Naive thymus-derived CD4-positive, alpha-beta T cell (primary cell): ENCODE measurements at regions of chr20 and their contacts with region 1.

Region 1: DNA sequence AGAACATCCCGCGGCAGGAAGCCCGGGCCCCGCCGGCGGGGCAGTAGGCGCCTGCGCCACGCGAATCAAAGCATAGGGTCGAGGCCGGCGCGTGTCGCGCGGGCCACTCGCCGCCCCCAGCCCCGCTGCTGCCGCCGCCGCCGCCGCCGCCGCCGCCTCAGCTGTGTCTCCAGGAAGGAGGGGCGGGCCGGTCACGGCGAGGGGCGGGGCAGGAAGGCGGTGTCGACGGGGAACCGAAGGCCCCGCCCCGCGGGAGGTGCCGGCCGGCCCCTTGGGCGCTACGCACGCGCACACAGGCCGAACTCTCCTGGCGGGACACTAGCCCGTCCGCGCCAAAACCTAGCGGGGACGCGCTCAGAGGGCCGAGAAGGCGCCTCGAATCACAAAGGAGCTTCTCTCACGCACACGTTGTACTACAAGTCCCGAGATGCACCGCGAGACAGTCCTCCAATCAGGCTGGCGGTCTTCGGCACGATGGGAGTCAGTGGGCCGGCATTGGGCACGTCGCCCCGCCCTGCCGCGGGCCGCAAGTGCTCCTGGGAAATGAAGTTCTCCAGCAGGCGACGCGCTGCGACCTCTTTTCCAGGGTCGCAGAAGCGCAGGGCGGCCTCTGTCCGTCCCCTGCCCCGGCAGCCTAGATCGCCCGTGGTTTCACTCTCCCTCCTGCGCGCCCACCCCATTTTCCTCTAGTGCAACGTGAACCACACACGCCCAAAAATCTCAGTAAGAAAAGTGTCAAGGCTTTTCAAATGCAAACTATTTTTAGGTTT is at the start of gene RALGAPA2:
- DNase-seq: peak; percentile 91 to 97 (median 95)
- ATAC-seq: peak; percentile 98
- H3K4me3 ChIP-seq: peak within 1 kb of the TSS; percentile 97
- H3K4me3 Mint-ChIP-seq: peak within 1 kb of the TSS; percentile 89 to 98 (median 96)
- H3K27ac ChIP-seq: peak within 1 kb of the TSS; percentile 91
- H3K27ac Mint-ChIP-seq: peak within 1 kb of the TSS; percentile 90 to 98 (median 95)
- H3K4me1 ChIP-seq: peaks cover 9% of the 10 kb centered on the region in 2 donors
- H3K4me1 Mint-ChIP-seq: peaks cover 23 to 41% (median 29%) of the 10 kb centered on the region in 7 donors
- H3K27me3 ChIP-seq: no peaks in the 10 kb centered on the region
- H3K27me3 Mint-ChIP-seq: no peaks in the 10 kb centered on the region
- total RNA-seq, gene RALGAPA2: 27.5 to 45.4 (median 35.1) TPM

Region 2: GRCh38 chr20:18793625-18794427 is 1918.8 kb before region 1 on chr20:
- CTCF ChIA-PET with region 1: no interaction called
- POLR2A ChIA-PET with region 1: no interaction called
- intact Hi-C with region 1: loop called (anchors 10 kb)
- DNase-seq: peak; percentile 62 to 94 (median 87)
- ATAC-seq: peak; percentile 99
- H3K4me3 ChIP-seq: peak overlapping the region; percentile 87
- H3K4me3 Mint-ChIP-seq: peak overlapping the region; percentile 85 to 99 (median 96)
- H3K27ac ChIP-seq: peak overlapping the region; percentile 92
- H3K27ac Mint-ChIP-seq: peak overlapping the region; percentile 97 to 100 (median 99)
- H3K4me1 ChIP-seq: peaks cover 8% of the 10 kb centered on the region in 2 donors
- H3K4me1 Mint-ChIP-seq: peaks cover 0 to 24% (median 18%) of the 10 kb centered on the region in 7 donors
- H3K27me3 ChIP-seq: no peaks in the 10 kb centered on the region
- H3K27me3 Mint-ChIP-seq: peaks cover 11 to 26% (median 21%) of the 10 kb centered on the region in 5 donors

Region 3: GRCh38 chr20:19867940-19868371 is 844.7 kb before region 1 on chr20:
- CTCF ChIA-PET with region 1: no interaction called
- POLR2A ChIA-PET with region 1: no interaction called
- intact Hi-C with region 1: no loop called
- DNase-seq: no peak
- ATAC-seq: peak; percentile 74
- H3K4me3 ChIP-seq: no peak overlapping the region
- H3K4me3 Mint-ChIP-seq: no peak overlapping the region
- H3K27ac ChIP-seq: no peak overlapping the region
- H3K27ac Mint-ChIP-seq: no peak overlapping the region
- H3K4me1 ChIP-seq: no peaks in the 10 kb centered on the region
- H3K4me1 Mint-ChIP-seq: no peaks in the 10 kb centered on the region
- H3K27me3 ChIP-seq: no peaks in the 10 kb centered on the region
- H3K27me3 Mint-ChIP-seq: peaks cover 0 to 29% (median 7%) of the 10 kb centered on the region in 5 donors

Region 4: DNA sequence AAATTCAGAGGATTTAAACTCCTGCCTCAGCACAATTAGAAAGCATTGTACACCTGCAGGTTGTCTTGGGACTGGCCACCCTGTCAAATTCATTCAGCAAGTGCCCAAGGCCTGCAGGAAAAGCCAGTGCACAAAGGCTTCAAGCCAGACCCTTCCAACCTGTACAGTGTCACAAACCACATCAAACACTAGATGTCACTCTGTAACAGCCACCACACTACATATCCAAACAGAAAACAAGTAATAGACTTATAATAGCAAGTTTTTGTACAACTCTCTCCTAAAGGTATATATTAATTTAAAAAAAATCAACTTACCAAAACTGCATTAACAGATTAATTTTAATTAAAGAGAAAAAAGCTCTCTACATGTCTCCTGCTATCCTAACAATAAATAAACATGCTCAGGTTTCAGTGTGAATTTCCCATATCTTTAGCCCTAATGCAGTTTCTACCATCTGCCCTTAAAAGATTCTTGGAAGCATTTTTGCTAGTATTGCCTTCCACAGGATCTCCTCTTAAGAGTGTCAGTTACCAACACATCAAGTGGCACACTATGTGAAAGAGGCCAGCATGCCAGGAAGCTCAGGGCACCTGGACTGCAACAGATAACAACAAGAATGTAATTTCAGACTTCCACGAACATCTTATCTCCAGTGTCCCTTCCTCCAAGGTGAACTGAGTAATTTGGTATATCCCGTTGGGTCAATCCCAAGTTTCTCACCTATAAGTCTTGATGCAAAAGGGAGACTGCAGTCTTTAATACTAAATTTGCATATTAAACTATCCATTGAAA is 47.7 kb before region 1 on chr20:
- CTCF ChIA-PET with region 1: no interaction called
- POLR2A ChIA-PET with region 1: no interaction called
- intact Hi-C with region 1: loop called in 1 of 2 experiments (anchors 2 kb)
- DNase-seq: peak in 3 of 9 donors; percentile 10 to 18 (median 17)
- ATAC-seq: peak; percentile 61
- H3K4me3 ChIP-seq: no peak overlapping the region
- H3K4me3 Mint-ChIP-seq: no peak overlapping the region
- H3K27ac ChIP-seq: no peak overlapping the region
- H3K27ac Mint-ChIP-seq: no peak overlapping the region
- H3K4me1 ChIP-seq: no peaks in the 10 kb centered on the region
- H3K4me1 Mint-ChIP-seq: peaks cover 21 to 50% (median 43%) of the 10 kb centered on the region in 7 donors
- H3K27me3 ChIP-seq: no peaks in the 10 kb centered on the region
- H3K27me3 Mint-ChIP-seq: no peaks in the 10 kb centered on the region

Region 5: DNA sequence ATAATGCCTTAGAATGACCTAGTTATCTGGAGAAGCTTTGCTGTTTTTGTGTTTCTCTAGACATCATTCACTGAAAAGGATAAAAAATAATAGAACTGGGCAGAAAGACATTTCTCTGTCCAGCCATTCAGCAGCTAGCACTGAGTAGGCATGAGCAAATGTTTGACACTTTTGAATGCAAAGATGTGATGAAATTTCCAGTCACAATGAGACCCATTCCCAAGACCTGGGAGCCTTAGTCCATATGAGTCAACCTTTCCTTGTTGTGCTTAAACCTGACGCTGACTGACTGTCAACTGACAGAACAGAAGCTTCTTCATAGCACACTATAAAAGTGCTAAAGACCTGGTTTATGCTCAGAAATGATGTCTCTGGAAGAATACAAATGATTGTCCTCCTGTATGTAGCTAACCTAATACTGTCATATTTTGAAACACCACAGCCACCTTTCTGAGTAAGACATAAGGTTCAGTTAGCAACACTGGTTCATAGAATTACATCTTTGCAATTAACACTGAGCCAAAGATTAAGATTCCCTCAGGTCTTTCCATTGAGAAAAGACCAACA is 17.3 kb before region 1 on chr20:
- CTCF ChIA-PET with region 1: no interaction called
- POLR2A ChIA-PET with region 1: no interaction called
- intact Hi-C with region 1: loop called in 1 of 2 experiments (anchors 2 kb)
- DNase-seq: no peak
- ATAC-seq: no peak
- H3K4me3 ChIP-seq: no peak overlapping the region
- H3K4me3 Mint-ChIP-seq: no peak overlapping the region
- H3K27ac ChIP-seq: no peak overlapping the region
- H3K27ac Mint-ChIP-seq: no peak overlapping the region
- H3K4me1 ChIP-seq: no peaks in the 10 kb centered on the region
- H3K4me1 Mint-ChIP-seq: peaks cover 2 to 49% (median 39%) of the 10 kb centered on the region in 7 donors
- H3K27me3 ChIP-seq: no peaks in the 10 kb centered on the region
- H3K27me3 Mint-ChIP-seq: no peaks in the 10 kb centered on the region

Region 6: GRCh38 chr20:20759132-20759531 is 46.5 kb after region 1 on chr20:
- CTCF ChIA-PET with region 1: no interaction called
- POLR2A ChIA-PET with region 1: no interaction called
- intact Hi-C with region 1: no loop called
- DNase-seq: no peak
- ATAC-seq: no peak
- H3K4me3 ChIP-seq: no peak overlapping the region
- H3K4me3 Mint-ChIP-seq: no peak overlapping the region
- H3K27ac ChIP-seq: no peak overlapping the region
- H3K27ac Mint-ChIP-seq: no peak overlapping the region
- H3K4me1 ChIP-seq: no peaks in the 10 kb centered on the region
- H3K4me1 Mint-ChIP-seq: peaks cover 0 to 5% (median 0%) of the 10 kb centered on the region in 7 donors
- H3K27me3 ChIP-seq: no peaks in the 10 kb centered on the region
- H3K27me3 Mint-ChIP-seq: peaks cover 6 to 18% (median 14%) of the 10 kb centered on the region in 5 donors

Region 7: DNA sequence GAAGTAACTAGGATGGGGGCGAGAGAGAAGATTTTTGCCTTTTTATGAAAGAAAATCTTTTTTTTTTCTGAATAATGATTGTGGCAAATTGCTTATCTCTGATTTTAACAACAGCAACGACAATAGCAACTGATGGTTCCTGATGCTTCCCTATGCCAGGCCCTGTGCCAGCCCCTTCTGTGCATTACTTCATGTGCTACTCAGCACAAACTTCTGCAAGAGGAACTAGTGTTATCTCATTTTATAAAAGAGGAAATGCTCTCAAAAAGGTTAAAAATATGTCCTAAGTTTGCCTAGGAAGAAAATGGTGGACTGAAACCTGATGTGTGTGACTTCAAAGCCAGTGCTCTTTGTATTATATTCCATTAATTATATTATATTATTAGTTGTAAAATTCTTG is 73.8 kb after region 1 on chr20:
- CTCF ChIA-PET with region 1: no interaction called
- POLR2A ChIA-PET with region 1: no interaction called
- intact Hi-C with region 1: no loop called
- DNase-seq: no peak
- ATAC-seq: peak; percentile 73
- H3K4me3 ChIP-seq: no peak overlapping the region
- H3K4me3 Mint-ChIP-seq: no peak overlapping the region
- H3K27ac ChIP-seq: no peak overlapping the region
- H3K27ac Mint-ChIP-seq: no peak overlapping the region
- H3K4me1 ChIP-seq: no peaks in the 10 kb centered on the region
- H3K4me1 Mint-ChIP-seq: peaks cover 0 to 3% (median 0%) of the 10 kb centered on the region in 7 donors
- H3K27me3 ChIP-seq: no peaks in the 10 kb centered on the region
- H3K27me3 Mint-ChIP-seq: peaks cover 0 to 20% (median 6%) of the 10 kb centered on the region in 5 donors

Region 8: DNA sequence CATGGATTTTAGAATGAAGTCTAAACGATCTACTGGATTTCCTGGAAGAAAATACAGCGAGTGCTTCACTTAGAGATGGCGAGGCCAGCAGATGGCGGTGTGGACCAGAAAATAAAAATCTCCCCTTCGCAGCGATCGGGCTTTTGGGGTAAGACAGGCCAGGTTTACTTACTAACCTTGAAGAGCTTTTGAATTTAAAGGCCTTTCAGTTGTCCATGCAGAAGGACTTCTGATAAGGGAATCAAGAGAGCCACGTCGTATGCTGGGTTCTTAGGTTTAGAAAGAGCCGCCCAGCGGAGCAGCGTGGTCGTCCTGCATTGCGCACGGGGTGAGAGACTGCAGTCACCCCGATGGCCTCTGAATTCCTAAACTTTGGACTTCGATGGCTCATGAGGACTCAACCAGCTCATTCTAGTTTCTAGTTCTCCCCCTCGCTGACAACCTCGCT is 124.9 kb after region 1 on chr20:
- CTCF ChIA-PET with region 1: no interaction called
- POLR2A ChIA-PET with region 1: no interaction called
- intact Hi-C with region 1: no loop called
- DNase-seq: peak in 6 of 9 donors; percentile 4 to 25 (median 19)
- ATAC-seq: peak; percentile 50
- H3K4me3 ChIP-seq: no peak overlapping the region
- H3K4me3 Mint-ChIP-seq: peak overlapping the region in 2 of 10 donors; percentile 13 to 49
- H3K27ac ChIP-seq: no peak overlapping the region
- H3K27ac Mint-ChIP-seq: no peak overlapping the region
- H3K4me1 ChIP-seq: no peaks in the 10 kb centered on the region
- H3K4me1 Mint-ChIP-seq: peaks cover 0 to 5% (median 4%) of the 10 kb centered on the region in 7 donors
- H3K27me3 ChIP-seq: no peaks in the 10 kb centered on the region
- H3K27me3 Mint-ChIP-seq: peaks cover 13 to 32% (median 30%) of the 10 kb centered on the region in 5 donors

Region 9: GRCh38 chr20:21548390-21549035 is 835.9 kb after region 1 on chr20:
- CTCF ChIA-PET with region 1: no interaction called
- POLR2A ChIA-PET with region 1: no interaction called
- intact Hi-C with region 1: loop called (anchors 5 to 10 kb)
- DNase-seq: peak in 8 of 9 donors; percentile 43 to 86 (median 82)
- ATAC-seq: peak; percentile 91
- H3K4me3 ChIP-seq: peak overlapping the region; percentile 51
- H3K4me3 Mint-ChIP-seq: peak overlapping the region; percentile 60 to 81 (median 75)
- H3K27ac ChIP-seq: peak overlapping the region; percentile 79
- H3K27ac Mint-ChIP-seq: peak overlapping the region; percentile 88 to 97 (median 94)
- H3K4me1 ChIP-seq: peaks cover 4 to 35% of the 10 kb centered on the region in 2 donors
- H3K4me1 Mint-ChIP-seq: peaks cover 10 to 48% (median 37%) of the 10 kb centered on the region in 7 donors
- H3K27me3 ChIP-seq: no peaks in the 10 kb centered on the region
- H3K27me3 Mint-ChIP-seq: peaks cover 0 to 3% (median 0%) of the 10 kb centered on the region in 5 donors